ENCODE measurements at regions of chr5 and their contacts with region 1.

Region 1: DNA sequence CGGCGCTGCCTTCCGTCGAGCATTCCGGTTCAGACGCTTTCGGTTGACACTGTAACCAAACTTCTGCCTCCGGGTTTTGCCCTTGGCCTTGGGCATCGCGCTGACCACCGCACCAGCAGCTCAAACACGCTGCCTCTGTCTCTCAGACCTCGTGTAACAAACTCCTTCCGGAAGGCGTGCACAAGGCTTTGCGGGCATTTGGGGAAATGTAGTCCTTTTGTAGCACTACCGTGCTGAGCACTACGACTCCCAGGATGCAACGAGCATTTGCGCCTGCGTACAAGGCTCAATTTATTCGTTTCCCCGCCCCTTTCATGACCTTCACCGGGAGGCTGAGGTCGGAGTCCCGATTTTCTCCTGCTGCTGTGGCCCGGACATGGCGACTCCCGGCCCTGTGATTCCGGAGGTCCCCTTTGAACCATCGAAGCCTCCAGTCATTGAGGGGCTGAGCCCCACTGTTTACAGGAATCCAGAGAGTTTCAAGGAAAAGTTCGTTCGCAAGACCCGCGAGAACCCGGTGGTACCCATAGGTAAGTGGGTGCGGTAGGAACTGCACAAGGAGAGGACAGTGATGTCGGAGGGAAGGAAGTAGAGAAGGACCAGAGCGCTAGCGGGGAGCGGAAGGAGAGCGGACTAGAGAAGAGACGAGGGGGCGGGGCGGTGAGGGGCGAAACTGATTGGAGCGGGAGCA is at the starts of genes HIGD2A and NOP16:
- DNase-seq: peak; percentile 99
- ATAC-seq: peak; percentile 91 to 92
- H3K4me3 ChIP-seq: peak within 1 kb of the TSS; percentile 76 to 95 (median 86)
- H3K27ac ChIP-seq: peak within 1 kb of the TSS; percentile 92 to 98 (median 96)
- H3K4me1 ChIP-seq: peaks cover 31 to 35% of the 10 kb centered on the region in 2 donors
- H3K27me3 ChIP-seq: no peaks in the 10 kb centered on the region
- CTCF ChIP-seq: peak in 2 of 5 experiments; percentile 6 to 21
- POLR2A ChIP-seq: peak; percentile 92 to 93
- total RNA-seq, gene HIGD2A: 189 to 274 (median 229) TPM
- total RNA-seq, gene NOP16: 21.6 to 43.5 (median 33.9) TPM

Region 2: GRCh38 chr5:176361437-176362232 is 27.0 kb before region 1 on chr5 and contains the start of gene KIAA1191:
- in situ Hi-C with region 1: no loop called
- intact Hi-C with region 1: loop called (anchors 1 kb)
- DNase-seq: peak; percentile 94 to 96
- ATAC-seq: peak; percentile 85 to 87
- H3K4me3 ChIP-seq: peak within 1 kb of the TSS; percentile 83 to 99 (median 96)
- H3K27ac ChIP-seq: peak within 1 kb of the TSS; percentile 92 to 97 (median 94)
- H3K4me1 ChIP-seq: peaks cover 14 to 28% of the 10 kb centered on the region in 2 donors
- H3K27me3 ChIP-seq: no peaks in the 10 kb centered on the region
- CTCF ChIP-seq: peak in 2 of 5 experiments; percentile 34 to 51
- POLR2A ChIP-seq: peak; percentile 97 to 98
- total RNA-seq, gene KIAA1191: 76.3 to 174 (median 84.1) TPM

Region 3: DNA sequence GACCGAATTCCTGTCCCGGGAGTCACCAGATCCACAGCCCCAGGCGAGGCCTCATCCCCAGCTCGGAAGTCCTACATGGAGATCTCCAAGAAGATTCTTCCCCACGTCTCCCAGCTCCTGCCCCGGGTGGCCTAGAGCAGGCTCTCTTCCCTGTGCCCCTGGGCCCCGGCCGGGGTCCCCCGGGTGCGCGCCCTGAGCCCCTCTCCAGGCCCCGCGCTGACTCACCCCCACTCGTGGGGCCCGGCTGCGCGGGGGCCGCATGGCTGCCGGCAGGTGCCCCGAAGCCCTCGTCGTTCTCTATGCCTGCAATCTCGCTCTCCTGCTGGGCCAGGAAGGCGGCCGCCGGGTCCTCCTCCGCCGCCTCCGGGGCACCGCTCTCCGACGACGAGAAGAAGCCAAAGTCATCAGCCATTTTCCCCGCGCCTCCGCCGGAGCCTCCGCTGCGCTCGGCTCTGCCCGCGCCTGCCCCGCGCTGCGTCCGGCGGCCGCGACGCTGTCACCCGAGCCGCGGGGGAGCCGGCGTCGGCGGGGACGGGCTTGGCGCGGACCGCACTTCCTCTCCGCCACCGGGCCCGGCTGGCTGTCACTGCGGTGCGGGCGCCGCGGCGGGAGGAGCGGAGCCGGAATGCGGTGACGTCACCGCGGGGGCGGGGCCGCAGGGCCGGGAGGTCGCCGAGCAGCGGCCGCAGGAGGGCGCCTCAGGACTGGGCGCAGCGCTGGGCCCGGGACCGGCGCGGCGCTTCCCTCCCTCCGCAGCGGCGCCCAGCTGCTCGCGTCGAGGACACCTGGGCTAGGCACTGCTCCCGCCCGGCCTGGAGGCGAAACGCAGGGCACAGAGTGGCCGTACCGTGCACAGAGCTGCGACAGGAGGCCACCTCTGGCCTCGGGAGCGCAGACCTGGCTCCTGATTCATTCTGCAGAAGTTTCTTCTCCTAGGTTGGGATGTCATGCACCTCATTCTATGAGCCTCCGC is 27.6 kb after region 1 on chr5 and contains the start of gene CLTB:
- in situ Hi-C with region 1: no loop called
- intact Hi-C with region 1: loop called (anchors 1 kb)
- DNase-seq: peak; percentile 83 to 89
- ATAC-seq: peak; percentile 83 to 88
- H3K4me3 ChIP-seq: peak within 1 kb of the TSS; percentile 76 to 97 (median 92)
- H3K27ac ChIP-seq: peak within 1 kb of the TSS; percentile 88 to 99 (median 98)
- H3K4me1 ChIP-seq: peaks cover 39 to 41% of the 10 kb centered on the region in 2 donors
- H3K27me3 ChIP-seq: no peaks in the 10 kb centered on the region
- CTCF ChIP-seq: peak; percentile 53 to 93 (median 91)
- POLR2A ChIP-seq: peak; percentile 95 to 96
- total RNA-seq, gene CLTB: 261 to 386 (median 302) TPM

Region 4: DNA sequence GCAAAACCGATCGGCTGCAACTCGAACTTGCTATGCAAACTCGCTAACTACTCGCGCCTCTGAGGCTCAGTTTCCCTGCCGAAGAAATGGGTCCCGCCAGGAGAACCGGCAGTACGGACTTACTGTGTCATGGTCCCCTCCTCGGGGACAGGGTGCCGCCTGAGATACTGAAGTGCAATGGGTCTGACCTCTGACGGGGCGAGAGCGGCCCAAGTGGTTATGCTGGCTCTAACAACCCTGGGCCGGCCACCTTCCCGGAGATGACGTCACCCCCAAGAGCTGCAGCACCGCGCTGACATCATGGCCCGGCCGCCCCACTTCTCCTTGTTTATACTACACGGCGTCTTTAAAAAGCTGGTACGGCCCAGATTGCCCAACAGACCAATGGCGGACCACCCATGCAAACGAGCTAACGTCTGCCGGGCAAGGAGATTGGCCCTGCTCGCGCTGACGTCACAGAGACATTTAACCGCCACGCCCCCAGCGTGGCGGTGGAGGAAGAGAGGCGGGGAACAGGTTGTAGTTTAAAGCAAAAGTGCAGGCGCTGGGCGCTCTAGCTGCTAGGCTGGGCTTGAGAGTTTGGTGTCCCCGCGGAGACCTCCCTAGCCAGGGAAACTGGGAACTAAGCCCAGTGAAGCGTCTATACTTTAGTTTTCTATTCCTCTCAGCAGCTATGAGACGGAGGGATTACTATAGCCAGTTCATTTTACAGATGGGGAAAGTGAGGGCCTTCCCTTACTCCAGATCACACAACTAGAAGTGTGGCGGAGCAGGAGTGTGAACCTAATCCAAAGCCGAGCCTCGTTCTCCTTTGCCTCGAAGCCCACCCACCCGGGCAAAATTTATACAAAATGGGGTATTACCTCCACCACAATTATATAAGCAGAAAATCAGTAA is 149.3 kb after region 1 on chr5:
- in situ Hi-C with region 1: no loop called
- intact Hi-C with region 1: loop called (anchors 1 kb)
- DNase-seq: peak; percentile 100
- ATAC-seq: peak; percentile 85 to 87
- H3K4me3 ChIP-seq: peak overlapping the region; percentile 73 to 97 (median 90)
- H3K27ac ChIP-seq: peak overlapping the region; percentile 94 to 100 (median 97)
- H3K4me1 ChIP-seq: peaks cover 46 to 54% of the 10 kb centered on the region in 2 donors
- H3K27me3 ChIP-seq: no peaks in the 10 kb centered on the region
- CTCF ChIP-seq: peak in 1 of 5 experiments; percentile 8
- POLR2A ChIP-seq: peak in 1 of 2 donors; percentile 69

Region 5: GRCh38 chr5:176929654-176930053 is 541.1 kb after region 1 on chr5:
- in situ Hi-C with region 1: no loop called
- intact Hi-C with region 1: no loop called
- DNase-seq: no peak
- ATAC-seq: no peak
- H3K4me3 ChIP-seq: no peak overlapping the region
- H3K27ac ChIP-seq: no peak overlapping the region
- H3K4me1 ChIP-seq: no peaks in the 10 kb centered on the region
- H3K27me3 ChIP-seq: no peaks in the 10 kb centered on the region
- CTCF ChIP-seq: no peak
- POLR2A ChIP-seq: no peak

Region 6: GRCh38 chr5:177022384-177023308 is 634.1 kb after region 1 on chr5 and contains the start of gene ZNF346:
- in situ Hi-C with region 1: no loop called
- intact Hi-C with region 1: loop called (anchors 10 kb)
- DNase-seq: peak; percentile 85 to 88
- ATAC-seq: peak; percentile 91 to 92
- H3K4me3 ChIP-seq: peak within 1 kb of the TSS; percentile 67 to 98 (median 88)
- H3K27ac ChIP-seq: peak within 1 kb of the TSS; percentile 78 to 88 (median 86)
- H3K4me1 ChIP-seq: peaks cover 17 to 24% of the 10 kb centered on the region in 2 donors
- H3K27me3 ChIP-seq: no peaks in the 10 kb centered on the region
- CTCF ChIP-seq: peak; percentile 60 to 69 (median 66)
- POLR2A ChIP-seq: peak in 1 of 2 donors; percentile 57
- total RNA-seq, gene ZNF346: 5.2 to 8.0 (median 6.8) TPM

Measured in gastrocnemius medialis (tissue), 4 donors.